Ascending aorta (tissue), 2 donors: ENCODE measurements at regions of chr5 and their contacts with region 1.

Region 1: GRCh38 chr5:146446853-146447733 is at the start of gene TCERG1:
- DNase-seq: peak; percentile 98 to 100
- H3K4me3 ChIP-seq: peak within 1 kb of the TSS; percentile 74 to 78
- H3K27ac ChIP-seq: peak within 1 kb of the TSS; percentile 75
- H3K4me1 ChIP-seq: peaks cover 0 to 11% of the 10 kb centered on the region in 2 donors
- H3K27me3 ChIP-seq: no peaks in the 10 kb centered on the region
- CTCF ChIP-seq: peak; percentile 47 to 84 (median 75)
- total RNA-seq, gene TCERG1: 39.8 TPM

Region 2: GRCh38 chr5:146203011-146203871 is 243.9 kb before region 1 on chr5 and contains the start of gene RBM27:
- intact Hi-C with region 1: loop called (anchors 1 kb)
- DNase-seq: peak; percentile 93 to 99
- H3K4me3 ChIP-seq: peak within 1 kb of the TSS; percentile 93 to 94
- H3K27ac ChIP-seq: peak within 1 kb of the TSS; percentile 93
- H3K4me1 ChIP-seq: peaks cover 0 to 19% of the 10 kb centered on the region in 2 donors
- H3K27me3 ChIP-seq: no peaks in the 10 kb centered on the region
- CTCF ChIP-seq: no peak
- total RNA-seq, gene RBM27: 5.9 TPM